Activated CD4-positive, alpha-beta memory T cell treated with anti-CD3 and anti-CD28 coated beads, Interleukin-2, amount 10 ng/mL, durations not matched to agents 7 days and 5 days (primary cell): ENCODE measurements at regions of chr1 and their contacts with region 1.

Region 1: GRCh38 chr1:149886396-149887195 is 12.8 kb upstream of the BOLA1 start:
- DNase-seq: peak; percentile 91
- H3K4me3 Mint-ChIP-seq: no peak overlapping the region
- H3K27ac Mint-ChIP-seq: no peak overlapping the region
- H3K4me1 Mint-ChIP-seq: peaks cover 16% of the 10 kb centered on the region
- H3K27me3 Mint-ChIP-seq: no peaks in the 10 kb centered on the region

Region 2: DNA sequence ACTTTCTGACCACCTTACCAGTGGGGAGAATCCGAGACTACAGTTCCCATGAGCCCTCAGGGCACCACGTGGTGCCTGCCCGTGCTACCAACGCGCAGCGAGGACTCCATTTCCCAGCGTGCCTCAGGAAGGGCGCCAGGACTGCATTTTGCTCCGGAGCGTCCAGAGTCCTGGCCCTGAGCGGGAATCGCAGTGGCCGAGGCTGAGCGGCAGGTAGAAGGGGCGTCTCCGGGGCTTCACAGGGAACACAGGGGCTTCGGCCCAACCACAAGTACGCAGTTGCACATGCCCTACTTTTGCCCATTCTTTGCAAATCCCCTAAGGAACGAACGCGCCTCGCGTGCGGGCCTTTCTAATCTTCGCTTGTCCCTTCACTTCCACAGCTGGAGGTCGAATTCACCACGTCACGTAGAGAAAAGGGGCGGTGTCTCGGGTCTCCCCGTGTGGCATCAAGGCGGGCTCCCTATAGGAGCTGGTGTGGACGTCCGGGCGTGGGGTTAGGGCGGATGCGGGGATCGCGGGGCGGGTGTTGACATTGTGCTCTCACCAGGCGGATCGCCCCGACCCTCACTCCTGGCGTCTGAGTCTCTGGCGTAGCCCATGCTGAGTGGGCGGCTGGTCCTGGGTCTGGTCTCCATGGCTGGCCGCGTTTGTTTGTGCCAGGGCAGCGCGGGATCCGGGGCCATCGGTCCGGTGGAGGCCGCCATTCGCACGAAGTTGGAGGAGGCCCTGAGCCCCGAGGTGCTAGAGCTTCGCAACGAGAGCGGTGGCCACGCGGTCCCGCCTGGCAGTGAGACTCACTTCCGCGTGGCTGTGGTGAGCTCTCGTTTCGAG is 13.1 kb after region 1 on chr1 and contains the start of gene BOLA1:
- CTCF ChIA-PET with region 1: interaction called, 17 read pairs
- POLR2A ChIA-PET with region 1: interaction called, 85 read pairs
- DNase-seq: peak; percentile 86
- H3K4me3 Mint-ChIP-seq: peak within 1 kb of the TSS; percentile 83
- H3K27ac Mint-ChIP-seq: peak within 1 kb of the TSS; percentile 87
- H3K4me1 Mint-ChIP-seq: peaks cover 29% of the 10 kb centered on the region
- H3K27me3 Mint-ChIP-seq: no peaks in the 10 kb centered on the region
- total RNA-seq, gene BOLA1: 24.9 to 27.2 TPM

Region 3: DNA sequence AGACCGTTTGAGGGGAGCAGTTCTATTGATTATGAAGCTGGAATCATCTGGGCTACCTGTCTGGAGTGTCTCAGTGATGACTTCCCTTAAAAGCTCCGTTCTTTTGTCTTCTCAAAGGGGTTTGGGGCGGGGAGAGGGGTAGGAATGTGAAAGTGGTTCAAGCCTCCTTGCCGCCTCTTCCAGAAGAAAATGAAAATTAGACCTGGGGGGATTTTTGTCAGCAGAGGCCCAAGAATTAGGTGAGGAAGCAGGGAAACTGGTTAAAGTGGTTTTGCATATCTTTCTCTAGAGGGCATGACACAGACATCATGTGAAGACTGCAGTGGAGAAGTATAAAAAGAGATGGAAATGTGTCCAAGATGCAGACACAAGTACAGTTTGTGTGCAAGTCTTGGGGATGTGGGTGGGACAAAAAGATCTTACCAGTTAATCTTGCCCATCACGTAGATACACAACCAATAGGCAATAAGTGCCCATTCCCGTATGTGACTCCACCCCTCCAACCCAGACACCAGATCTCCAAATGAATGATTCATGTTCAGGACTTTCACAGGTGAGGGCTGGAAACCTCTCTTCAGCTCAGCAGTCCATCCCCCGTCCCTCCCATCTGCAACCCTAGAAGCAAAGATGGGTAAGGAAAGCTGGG is 50.6 kb after region 1 on chr1:
- CTCF ChIA-PET with region 1: no interaction called
- POLR2A ChIA-PET with region 1: interaction called, 160 read pairs
- DNase-seq: no peak
- H3K4me3 Mint-ChIP-seq: no peak overlapping the region
- H3K27ac Mint-ChIP-seq: peak overlapping the region; percentile 63
- H3K4me1 Mint-ChIP-seq: peaks cover 36% of the 10 kb centered on the region
- H3K27me3 Mint-ChIP-seq: no peaks in the 10 kb centered on the region

Region 4: GRCh38 chr1:150010393-150011115 is 124.0 kb after region 1 on chr1 and contains the start of gene OTUD7B:
- CTCF ChIA-PET with region 1: interaction called, 4 read pairs
- POLR2A ChIA-PET with region 1: interaction called, 101 read pairs
- DNase-seq: peak; percentile 80
- H3K4me3 Mint-ChIP-seq: peak within 1 kb of the TSS; percentile 91
- H3K27ac Mint-ChIP-seq: peak within 1 kb of the TSS; percentile 76
- H3K4me1 Mint-ChIP-seq: peaks cover 35% of the 10 kb centered on the region
- H3K27me3 Mint-ChIP-seq: no peaks in the 10 kb centered on the region
- total RNA-seq, gene OTUD7B: 15.9 to 17.4 TPM

Region 5: DNA sequence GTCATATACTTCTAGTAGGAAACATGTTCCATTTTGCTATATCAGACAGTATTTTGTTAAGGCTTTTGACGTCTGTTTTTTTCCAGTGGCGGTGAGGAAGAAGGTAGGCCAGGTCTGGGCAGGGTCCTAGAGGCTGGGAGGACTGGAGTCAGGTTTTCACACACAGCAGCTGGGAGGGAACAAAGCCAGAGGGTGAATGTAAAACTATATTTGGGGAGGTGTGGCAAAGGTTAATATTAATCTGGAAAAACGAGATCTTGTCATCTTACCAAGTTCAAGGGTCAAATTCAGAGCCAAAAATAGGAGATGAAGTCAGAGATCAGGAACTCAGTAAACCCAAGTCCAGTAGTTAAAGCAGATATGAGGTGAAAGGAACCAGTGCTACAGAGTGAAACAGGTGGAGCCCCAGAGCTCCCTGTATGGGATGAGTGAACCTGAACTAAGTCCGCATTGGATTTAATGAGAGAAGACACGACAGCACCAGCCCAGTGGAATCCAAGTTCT is 134.6 kb after region 1 on chr1:
- CTCF ChIA-PET with region 1: no interaction called
- POLR2A ChIA-PET with region 1: no interaction called
- DNase-seq: no peak
- H3K4me3 Mint-ChIP-seq: no peak overlapping the region
- H3K27ac Mint-ChIP-seq: no peak overlapping the region
- H3K4me1 Mint-ChIP-seq: no peaks in the 10 kb centered on the region
- H3K27me3 Mint-ChIP-seq: peaks cover 11% of the 10 kb centered on the region

Region 6: DNA sequence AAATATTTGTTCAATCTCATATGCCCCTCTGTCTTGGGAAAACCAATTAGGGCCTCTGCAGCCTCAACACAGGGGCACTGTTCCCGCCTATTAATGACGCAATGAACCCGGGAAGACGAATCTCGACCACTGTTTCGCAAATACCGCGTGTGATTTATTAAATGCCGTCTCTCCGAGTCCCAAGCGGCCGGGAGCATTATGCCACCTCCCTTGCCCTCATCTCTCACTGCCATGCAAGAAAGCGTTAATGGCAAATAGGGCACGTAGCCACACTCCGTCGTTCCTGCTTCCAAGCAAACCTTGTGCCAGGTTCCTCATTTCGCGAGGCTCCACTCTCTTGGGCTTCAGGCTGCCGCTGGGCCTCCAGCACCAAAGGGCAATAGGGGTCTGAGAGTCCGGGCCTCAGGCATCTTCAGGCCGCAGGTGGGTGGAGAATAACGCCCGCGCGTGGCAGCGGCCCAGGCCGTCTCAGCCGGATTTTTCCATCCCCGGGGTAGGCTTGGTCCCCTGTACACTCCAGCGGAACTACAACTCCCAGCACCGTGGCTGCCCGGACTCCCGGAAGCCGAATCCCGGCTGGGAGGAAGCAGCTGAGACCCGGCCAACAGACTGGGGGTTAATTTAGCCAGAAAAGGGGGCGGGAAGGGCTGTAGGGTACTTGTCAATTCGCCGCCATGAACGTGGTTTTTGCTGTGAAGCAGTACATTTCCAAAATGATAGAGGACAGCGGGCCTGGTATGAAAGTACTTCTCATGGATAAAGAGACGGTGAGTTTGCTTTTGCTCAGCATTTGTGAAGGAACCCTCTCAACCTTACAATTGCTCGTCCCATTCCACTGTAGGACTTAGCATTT is 180.8 kb after region 1 on chr1 and contains the start of gene VPS45:
- CTCF ChIA-PET with region 1: interaction called, 8 read pairs
- POLR2A ChIA-PET with region 1: interaction called, 83 read pairs
- DNase-seq: peak; percentile 86
- H3K4me3 Mint-ChIP-seq: peak within 1 kb of the TSS; percentile 95
- H3K27ac Mint-ChIP-seq: peak within 1 kb of the TSS; percentile 89
- H3K4me1 Mint-ChIP-seq: peaks cover 39% of the 10 kb centered on the region
- H3K27me3 Mint-ChIP-seq: no peaks in the 10 kb centered on the region
- total RNA-seq, gene VPS45: 35.4 to 39.0 TPM

Region 7: GRCh38 chr1:150168960-150169601 is 282.5 kb after region 1 on chr1:
- CTCF ChIA-PET with region 1: interaction called, 4 read pairs
- POLR2A ChIA-PET with region 1: interaction called, 10 read pairs
- DNase-seq: peak; percentile 65
- H3K4me3 Mint-ChIP-seq: no peak overlapping the region
- H3K27ac Mint-ChIP-seq: no peak overlapping the region
- H3K4me1 Mint-ChIP-seq: peaks cover 13% of the 10 kb centered on the region
- H3K27me3 Mint-ChIP-seq: peaks cover 2% of the 10 kb centered on the region